PC-3 (cell line): ENCODE measurements at regions of chr6 and their contacts with region 1.

Region 1: DNA sequence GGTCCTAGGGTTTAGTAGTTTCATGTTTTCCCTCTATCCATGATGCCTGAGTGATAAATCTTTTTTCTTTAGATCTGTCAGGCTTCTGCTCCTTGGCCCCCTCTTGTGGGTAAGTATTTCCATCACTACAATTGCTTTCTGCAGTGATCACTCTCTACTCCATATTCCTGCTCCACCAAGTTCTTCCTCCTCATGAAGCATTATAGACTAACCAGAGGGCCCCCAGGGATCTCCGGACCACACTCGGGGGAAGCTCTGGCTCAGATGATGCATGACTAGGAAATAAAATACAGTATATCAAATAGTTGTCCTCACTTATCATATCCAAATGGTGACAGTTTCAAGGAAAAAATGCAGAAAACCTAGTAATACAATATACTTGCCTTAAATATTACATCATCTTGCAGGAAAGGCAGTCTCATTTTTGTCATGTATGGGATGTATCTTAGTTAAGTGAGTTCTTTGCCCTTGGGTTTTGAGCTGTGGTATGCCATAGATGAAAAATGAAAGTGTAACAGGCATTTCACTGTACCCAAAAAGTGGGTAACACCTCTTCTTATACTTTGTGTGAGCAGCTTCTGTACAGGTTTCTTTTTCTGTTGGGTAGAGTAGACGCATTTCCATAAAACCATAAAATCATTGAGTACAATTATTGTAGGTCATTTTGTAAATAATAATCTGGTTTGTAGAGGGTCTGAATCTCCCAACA is 200.9 kb upstream of the EYA4 start:
- DNase-seq: peak; percentile 55
- ATAC-seq: peak; percentile 53
- H3K4me3 ChIP-seq: no peak overlapping the region
- H3K27ac ChIP-seq: no peak overlapping the region
- H3K4me1 ChIP-seq: no peaks in the 10 kb centered on the region
- H3K27me3 ChIP-seq: no peaks in the 10 kb centered on the region
- CTCF ChIP-seq: peak; percentile 72

Region 2: DNA sequence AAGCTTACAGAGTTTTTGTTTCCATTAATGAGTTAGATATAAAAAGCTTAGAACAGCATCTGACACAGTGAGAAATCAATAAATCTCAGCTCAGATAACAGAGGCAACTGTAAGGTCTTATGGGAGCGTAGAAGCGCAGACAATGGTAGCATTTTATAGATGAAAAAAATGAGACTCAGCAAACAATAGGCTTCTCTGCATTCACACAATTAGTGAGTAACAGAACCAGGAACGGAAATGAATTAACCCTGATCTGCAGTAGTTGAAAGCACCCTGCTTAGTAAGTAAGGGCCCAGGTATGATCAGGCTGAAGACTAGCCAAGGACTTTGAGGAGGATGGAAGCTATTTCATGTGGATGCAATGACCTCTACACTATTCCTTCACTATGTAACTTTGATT is 53.7 kb after region 1 on chr6:
- CTCF ChIA-PET with region 1: no interaction called
- POLR2A ChIA-PET with region 1: no interaction called
- intact Hi-C with region 1: loop called (anchors 1 kb)
- DNase-seq: peak; percentile 48
- ATAC-seq: peak; percentile 81
- H3K4me3 ChIP-seq: no peak overlapping the region
- H3K27ac ChIP-seq: no peak overlapping the region
- H3K4me1 ChIP-seq: peaks cover 9% of the 10 kb centered on the region
- H3K27me3 ChIP-seq: no peaks in the 10 kb centered on the region
- CTCF ChIP-seq: no peak